ENCODE measurements at regions of chr3 and their contacts with region 1.

Region 1: DNA sequence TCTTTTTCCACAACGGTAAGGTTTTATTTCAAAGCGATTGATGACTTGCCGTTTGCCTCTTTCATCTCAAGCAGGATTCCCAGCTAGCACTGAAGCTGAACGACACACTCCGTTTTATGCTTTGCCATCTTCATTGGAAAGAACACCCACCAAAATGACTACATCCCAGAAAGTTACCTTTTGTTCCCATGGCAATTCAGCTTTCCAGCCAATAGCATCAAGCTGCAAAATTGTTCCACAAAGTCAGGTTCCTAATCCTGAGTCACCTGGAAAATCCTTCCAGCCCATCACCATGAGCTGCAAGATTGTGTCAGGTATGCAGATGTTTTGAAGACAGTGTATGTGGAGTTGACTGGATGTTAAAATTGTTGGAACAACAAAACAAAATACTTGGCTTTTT is 56.5 kb downstream of the YEATS2 start:
- DNase-seq: no peak
- H3K4me3 ChIP-seq: no peak overlapping the region
- H3K27me3 ChIP-seq: no peaks in the 10 kb centered on the region
- CTCF ChIP-seq: no peak

Region 2: GRCh38 chr3:183766745-183767606 is 12.9 kb after region 1 on chr3:
- CTCF ChIA-PET with region 1: interaction called, 10 read pairs
- POLR2A ChIA-PET with region 1: interaction called, 5 read pairs
- DNase-seq: no peak
- H3K4me3 ChIP-seq: no peak overlapping the region
- H3K27me3 ChIP-seq: no peaks in the 10 kb centered on the region
- CTCF ChIP-seq: peak; percentile 79